PC-3 (cell line): ENCODE measurements at regions of chr2 and their contacts with region 1.

Region 1: GRCh38 chr2:40244675-40245074 is 207.2 kb downstream of the SLC8A1 start:
- DNase-seq: peak; percentile 77
- ATAC-seq: peak; percentile 94
- H3K4me3 ChIP-seq: no peak overlapping the region
- H3K27ac ChIP-seq: no peak overlapping the region
- H3K4me1 ChIP-seq: no peaks in the 10 kb centered on the region
- H3K27me3 ChIP-seq: no peaks in the 10 kb centered on the region
- CTCF ChIP-seq: peak; percentile 80

Region 2: GRCh38 chr2:39851651-39852110 is 393.0 kb before region 1 on chr2:
- CTCF ChIA-PET with region 1: interaction called, 16 read pairs
- POLR2A ChIA-PET with region 1: no interaction called
- intact Hi-C with region 1: no loop called
- DNase-seq: peak; percentile 28
- ATAC-seq: peak; percentile 41
- H3K4me3 ChIP-seq: no peak overlapping the region
- H3K27ac ChIP-seq: no peak overlapping the region
- H3K4me1 ChIP-seq: peaks cover 25% of the 10 kb centered on the region
- H3K27me3 ChIP-seq: no peaks in the 10 kb centered on the region
- CTCF ChIP-seq: 0 out of 2 replicates have a peak, but pooled peaks have one; percentile 23

Region 3: GRCh38 chr2:39948016-39948719 is 296.5 kb before region 1 on chr2:
- CTCF ChIA-PET with region 1: no interaction called
- POLR2A ChIA-PET with region 1: interaction called, 10 read pairs
- intact Hi-C with region 1: no loop called
- DNase-seq: peak; percentile 32
- ATAC-seq: no peak
- H3K4me3 ChIP-seq: no peak overlapping the region
- H3K27ac ChIP-seq: no peak overlapping the region
- H3K4me1 ChIP-seq: peaks cover 14% of the 10 kb centered on the region
- H3K27me3 ChIP-seq: no peaks in the 10 kb centered on the region
- CTCF ChIP-seq: no peak

Region 4: GRCh38 chr2:40448468-40449079 is 203.9 kb after region 1 on chr2:
- CTCF ChIA-PET with region 1: no interaction called
- POLR2A ChIA-PET with region 1: no interaction called
- intact Hi-C with region 1: loop called (anchors 5 kb)
- DNase-seq: peak; percentile 68
- ATAC-seq: no peak
- H3K4me3 ChIP-seq: no peak overlapping the region
- H3K27ac ChIP-seq: no peak overlapping the region
- H3K4me1 ChIP-seq: no peaks in the 10 kb centered on the region
- H3K27me3 ChIP-seq: no peaks in the 10 kb centered on the region
- CTCF ChIP-seq: peak; percentile 84